Right ventricle myocardium superior (tissue), 1 donor: ENCODE measurements at regions of chr15 and their contacts with region 1.

Region 1: GRCh38 chr15:95486224-95486623 is 844.3 kb upstream of the NR2F2 start:
- DNase-seq: no peak
- ATAC-seq: no peak

Region 2: DNA sequence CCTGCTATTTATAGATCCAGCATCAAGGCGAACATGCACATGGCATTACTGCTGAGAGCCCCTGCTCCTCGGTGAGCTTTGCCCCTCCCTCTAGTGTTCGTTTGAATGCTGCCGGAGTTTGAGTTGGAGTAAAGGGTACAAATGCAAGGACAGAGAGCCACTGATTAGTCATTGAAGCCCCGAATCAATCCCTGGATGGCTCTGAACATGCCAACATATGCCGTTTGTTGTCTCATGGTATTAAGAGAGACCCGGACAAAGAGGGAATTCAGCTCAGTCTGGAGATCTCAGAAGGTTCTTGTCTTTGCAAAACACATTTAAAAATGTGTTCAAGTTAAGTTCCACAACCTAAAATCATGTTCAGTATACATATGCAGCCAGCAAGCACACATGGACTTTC is 55.1 kb after region 1 on chr15:
- intact Hi-C with region 1: loop called (anchors 2 kb)
- DNase-seq: no peak
- ATAC-seq: no peak